ENCODE measurements at regions of chr19 and their contacts with region 1.

Region 1: GRCh38 chr19:7442423-7442822 is 46.4 kb downstream of the PEX11G start:
- DNase-seq: peak in 1 of 4 donors; percentile 15
- ATAC-seq: no peak
- H3K4me3 ChIP-seq: no peak overlapping the region
- H3K27ac ChIP-seq: no peak overlapping the region
- H3K4me1 ChIP-seq: no peaks in the 10 kb centered on the region
- H3K27me3 ChIP-seq: no peaks in the 10 kb centered on the region
- CTCF ChIP-seq: no peak
- POLR2A ChIP-seq: no peak

Region 2: GRCh38 chr19:7815325-7815724 is 372.9 kb after region 1 on chr19:
- intact Hi-C with region 1: loop called (anchors 10 kb)
- DNase-seq: no peak
- ATAC-seq: no peak
- H3K4me3 ChIP-seq: no peak overlapping the region
- H3K27ac ChIP-seq: no peak overlapping the region
- H3K4me1 ChIP-seq: no peaks in the 10 kb centered on the region
- H3K27me3 ChIP-seq: peaks cover 0 to 2% of the 10 kb centered on the region in 2 donors
- CTCF ChIP-seq: no peak
- POLR2A ChIP-seq: no peak